GM10248 (cell line): ENCODE measurements at regions of chr1 and their contacts with region 1.

Region 1: DNA sequence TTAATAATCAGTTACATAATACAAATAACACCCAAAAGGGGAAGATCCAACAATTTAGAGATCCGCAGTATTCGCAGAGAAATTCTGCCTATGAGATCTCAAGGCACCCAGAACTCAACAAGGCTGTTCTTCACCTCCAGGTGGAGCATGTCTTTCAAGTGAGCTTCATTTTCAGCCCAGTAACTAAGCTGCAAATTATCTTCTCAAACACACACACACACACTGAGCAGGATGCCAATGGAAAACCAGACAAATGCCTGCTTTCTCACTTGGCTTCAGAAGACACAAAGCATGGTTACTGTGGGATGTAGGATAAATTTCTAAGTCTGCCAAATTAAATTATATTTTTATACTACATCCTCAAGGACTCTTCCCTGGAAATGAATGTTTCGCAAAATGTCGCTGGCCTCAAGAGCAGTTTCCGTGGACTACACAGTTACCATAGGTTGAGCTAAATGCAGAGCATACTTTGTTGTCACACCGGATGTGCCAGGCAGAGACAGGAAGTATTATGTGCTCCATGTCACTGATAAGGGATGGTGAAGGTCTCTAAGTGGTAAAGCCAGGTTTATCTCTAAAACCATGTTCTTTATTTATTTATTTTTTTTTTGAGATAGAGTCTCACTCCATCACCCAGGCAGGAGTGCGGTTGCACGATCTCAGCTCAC is 30.3 kb downstream of the UBR4 start:
- DNase-seq: no peak
- CTCF ChIP-seq: peak; percentile 31

Region 2: DNA sequence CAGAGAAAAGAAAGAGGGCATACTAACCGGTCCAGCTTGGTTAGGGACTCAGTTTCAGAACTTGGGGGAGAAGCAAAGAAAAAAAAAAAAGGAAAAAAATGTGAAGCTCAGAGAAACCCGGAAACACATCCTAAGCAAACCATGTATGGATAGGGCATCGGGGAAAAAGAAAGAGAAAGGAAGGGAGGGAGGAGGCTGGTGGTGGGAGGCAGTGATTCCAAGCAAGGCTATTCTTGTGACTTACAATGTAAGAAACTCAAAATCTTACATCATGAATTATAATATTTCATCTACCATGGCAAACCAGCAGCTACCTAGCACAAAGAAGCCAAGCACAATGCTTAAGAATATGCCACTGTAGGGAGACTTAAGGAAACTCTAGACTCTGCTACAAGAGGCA is 30.0 kb before region 1 on chr1:
- CTCF ChIA-PET with region 1: no interaction called
- POLR2A ChIA-PET with region 1: no interaction called
- DNase-seq: no peak
- CTCF ChIP-seq: no peak

Region 3: GRCh38 chr1:19163261-19163660 is 16.5 kb before region 1 on chr1:
- CTCF ChIA-PET with region 1: interaction called, 13 read pairs
- POLR2A ChIA-PET with region 1: no interaction called
- DNase-seq: no peak
- CTCF ChIP-seq: no peak